Activated CD4-positive, alpha-beta T cell treated with anti-CD3 and anti-CD28 coated beads for 36 hours (primary cell): ENCODE measurements at regions of chr9 and their contacts with region 1.

Region 1: GRCh38 chr9:1869843-1870242 is 145.3 kb upstream of the SMARCA2 start:
- DNase-seq: peak; percentile 61
- ATAC-seq: peak; percentile 88
- H3K4me3 Mint-ChIP-seq: no peak overlapping the region
- H3K27ac Mint-ChIP-seq: no peak overlapping the region
- H3K4me1 Mint-ChIP-seq: peaks cover 14% of the 10 kb centered on the region
- H3K27me3 Mint-ChIP-seq: peaks cover 36% of the 10 kb centered on the region

Region 2: GRCh38 chr9:1460143-1460769 is 409.6 kb before region 1 on chr9:
- CTCF ChIA-PET with region 1: no interaction called
- POLR2A ChIA-PET with region 1: no interaction called
- intact Hi-C with region 1: loop called (anchors 1 to 5 kb)
- DNase-seq: peak; percentile 30
- ATAC-seq: peak; percentile 42
- H3K4me3 Mint-ChIP-seq: no peak overlapping the region
- H3K27ac Mint-ChIP-seq: no peak overlapping the region
- H3K4me1 Mint-ChIP-seq: peaks cover 4% of the 10 kb centered on the region
- H3K27me3 Mint-ChIP-seq: peaks cover 10% of the 10 kb centered on the region

Region 3: GRCh38 chr9:1709345-1709744 is 160.5 kb before region 1 on chr9:
- CTCF ChIA-PET with region 1: no interaction called
- POLR2A ChIA-PET with region 1: no interaction called
- intact Hi-C with region 1: loop called in 1 of 2 experiments (anchors 5 kb)
- DNase-seq: peak; percentile 10
- ATAC-seq: no peak
- H3K4me3 Mint-ChIP-seq: no peak overlapping the region
- H3K27ac Mint-ChIP-seq: no peak overlapping the region
- H3K4me1 Mint-ChIP-seq: no peaks in the 10 kb centered on the region
- H3K27me3 Mint-ChIP-seq: peaks cover 12% of the 10 kb centered on the region

Region 4: GRCh38 chr9:1726993-1727759 is 142.7 kb before region 1 on chr9:
- CTCF ChIA-PET with region 1: interaction called, 4 read pairs
- POLR2A ChIA-PET with region 1: no interaction called
- intact Hi-C with region 1: loop called in 1 of 2 experiments (anchors 5 kb)
- DNase-seq: peak; percentile 13
- ATAC-seq: peak; percentile 19
- H3K4me3 Mint-ChIP-seq: no peak overlapping the region
- H3K27ac Mint-ChIP-seq: no peak overlapping the region
- H3K4me1 Mint-ChIP-seq: no peaks in the 10 kb centered on the region
- H3K27me3 Mint-ChIP-seq: peaks cover 11% of the 10 kb centered on the region

Region 5: GRCh38 chr9:1804128-1804865 is 65.5 kb before region 1 on chr9:
- CTCF ChIA-PET with region 1: no interaction called
- POLR2A ChIA-PET with region 1: no interaction called
- intact Hi-C with region 1: loop called in 1 of 2 experiments (anchors 5 kb)
- DNase-seq: no peak
- ATAC-seq: peak; percentile 75
- H3K4me3 Mint-ChIP-seq: no peak overlapping the region
- H3K27ac Mint-ChIP-seq: no peak overlapping the region
- H3K4me1 Mint-ChIP-seq: peaks cover 3% of the 10 kb centered on the region
- H3K27me3 Mint-ChIP-seq: no peaks in the 10 kb centered on the region

Region 6: DNA sequence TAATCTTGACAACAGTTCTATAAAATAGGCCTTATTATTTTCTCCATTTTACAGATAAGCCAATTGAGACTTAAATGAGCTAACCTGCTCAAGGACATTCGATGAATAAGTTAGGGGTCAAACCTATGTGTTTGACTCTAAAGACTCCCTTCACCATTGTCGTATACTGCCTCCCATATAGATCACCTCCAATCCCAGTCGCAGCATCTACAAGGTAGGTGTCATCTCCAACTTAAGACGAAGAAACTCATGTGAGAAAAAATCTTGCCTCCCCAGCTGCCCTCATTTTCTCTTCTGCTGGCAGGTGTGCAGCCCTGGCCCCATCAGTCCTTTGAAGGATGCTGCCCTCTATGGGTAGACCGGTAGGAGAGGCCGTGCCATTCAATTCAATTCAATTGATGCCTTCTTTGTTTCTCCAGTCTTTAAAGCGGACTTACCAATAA is 70.1 kb after region 1 on chr9:
- CTCF ChIA-PET with region 1: interaction called, 3 read pairs
- POLR2A ChIA-PET with region 1: no interaction called
- intact Hi-C with region 1: loop called (anchors 5 kb)
- DNase-seq: peak; percentile 62
- ATAC-seq: peak; percentile 83
- H3K4me3 Mint-ChIP-seq: no peak overlapping the region
- H3K27ac Mint-ChIP-seq: no peak overlapping the region
- H3K4me1 Mint-ChIP-seq: no peaks in the 10 kb centered on the region
- H3K27me3 Mint-ChIP-seq: peaks cover 7% of the 10 kb centered on the region

Region 7: DNA sequence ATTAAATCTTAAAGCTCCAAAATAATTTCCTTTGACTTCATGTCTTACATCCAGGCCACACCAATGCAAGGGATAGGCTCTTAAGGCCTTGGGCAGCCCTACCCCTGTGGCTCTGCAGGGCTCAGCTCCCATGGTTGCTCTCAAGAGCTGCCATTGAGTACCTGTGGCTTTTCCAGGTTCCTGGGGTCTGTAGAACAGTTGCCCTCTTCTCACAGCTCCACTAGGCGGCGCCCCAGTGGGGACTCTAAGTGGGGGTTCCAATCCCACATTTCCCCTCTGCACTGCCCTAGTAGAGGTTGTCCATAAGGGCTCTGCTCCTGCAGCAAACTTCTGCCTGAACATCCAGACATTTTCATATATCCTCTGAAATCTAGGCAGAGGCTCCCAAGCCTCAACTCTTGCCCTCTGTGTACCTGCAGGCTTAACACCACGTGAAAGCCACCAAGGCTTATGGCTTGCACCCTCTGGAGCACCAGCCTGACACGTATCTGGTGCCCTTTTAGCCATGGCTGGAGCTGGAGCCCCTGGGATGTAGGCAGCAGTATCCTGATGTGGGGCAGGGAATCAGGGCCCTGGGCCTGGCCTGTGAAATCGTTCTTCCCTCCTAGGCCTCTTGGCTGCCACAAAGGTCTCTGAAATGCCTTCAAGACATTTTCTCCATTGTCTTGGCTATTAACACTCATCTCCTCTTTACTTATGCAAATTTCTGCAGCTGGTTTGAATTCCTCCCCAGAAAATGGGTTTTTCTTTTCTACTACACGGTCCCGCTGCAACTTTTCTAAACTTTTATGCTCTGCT is 330.4 kb after region 1 on chr9:
- CTCF ChIA-PET with region 1: no interaction called
- POLR2A ChIA-PET with region 1: no interaction called
- intact Hi-C with region 1: loop called in 1 of 2 experiments (anchors 10 kb)
- DNase-seq: no peak
- ATAC-seq: no peak
- H3K4me3 Mint-ChIP-seq: no peak overlapping the region
- H3K27ac Mint-ChIP-seq: no peak overlapping the region
- H3K4me1 Mint-ChIP-seq: peaks cover 9% of the 10 kb centered on the region
- H3K27me3 Mint-ChIP-seq: no peaks in the 10 kb centered on the region